HCT116 (cell line): ENCODE measurements at regions of chr2 and their contacts with region 1.

Region 1: DNA sequence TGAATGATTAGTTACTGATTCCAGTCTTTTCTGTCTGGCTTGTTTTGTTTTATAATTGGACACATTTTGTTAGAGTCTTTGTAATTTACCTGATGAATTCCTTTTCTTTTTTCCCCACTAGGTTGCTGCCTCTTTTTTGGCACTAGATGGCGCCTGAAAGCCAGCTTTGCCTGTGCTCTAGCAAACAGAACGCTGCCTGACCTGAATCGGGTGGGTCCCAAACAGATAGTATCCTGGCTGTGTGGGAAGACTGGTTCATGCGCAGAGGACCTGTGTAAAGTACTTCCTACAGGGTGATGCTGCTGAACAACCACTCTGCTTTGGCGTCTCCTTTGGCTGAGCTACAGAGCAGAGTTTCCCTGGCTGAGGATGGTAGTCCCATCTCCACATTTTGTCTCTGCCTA is 288.2 kb downstream of the IKZF2 start:
- DNase-seq: peak; percentile 47
- ATAC-seq: peak; percentile 81
- H3K4me3 ChIP-seq: no peak overlapping the region
- H3K27ac ChIP-seq: no peak overlapping the region
- H3K4me1 ChIP-seq: no peaks in the 10 kb centered on the region
- H3K27me3 ChIP-seq: no peaks in the 10 kb centered on the region
- CTCF ChIP-seq: peak; percentile 53 to 91 (median 75); a peak in 5 of 6 replicates
- POLR2A ChIP-seq: no peak
- RAD21 ChIP-seq: peak; percentile 80

Region 2: GRCh38 chr2:212311807-212312404 is 551.3 kb before region 1 on chr2:
- CTCF ChIA-PET with region 1: no interaction called
- POLR2A ChIA-PET with region 1: no interaction called
- RAD21 ChIA-PET with region 1: no interaction called
- intact Hi-C with region 1: no loop called
- DNase-seq: no peak
- ATAC-seq: no peak
- H3K4me3 ChIP-seq: no peak overlapping the region
- H3K27ac ChIP-seq: no peak overlapping the region
- H3K4me1 ChIP-seq: no peaks in the 10 kb centered on the region
- H3K27me3 ChIP-seq: no peaks in the 10 kb centered on the region
- CTCF ChIP-seq: no peak
- POLR2A ChIP-seq: no peak
- RAD21 ChIP-seq: no peak

Region 3: DNA sequence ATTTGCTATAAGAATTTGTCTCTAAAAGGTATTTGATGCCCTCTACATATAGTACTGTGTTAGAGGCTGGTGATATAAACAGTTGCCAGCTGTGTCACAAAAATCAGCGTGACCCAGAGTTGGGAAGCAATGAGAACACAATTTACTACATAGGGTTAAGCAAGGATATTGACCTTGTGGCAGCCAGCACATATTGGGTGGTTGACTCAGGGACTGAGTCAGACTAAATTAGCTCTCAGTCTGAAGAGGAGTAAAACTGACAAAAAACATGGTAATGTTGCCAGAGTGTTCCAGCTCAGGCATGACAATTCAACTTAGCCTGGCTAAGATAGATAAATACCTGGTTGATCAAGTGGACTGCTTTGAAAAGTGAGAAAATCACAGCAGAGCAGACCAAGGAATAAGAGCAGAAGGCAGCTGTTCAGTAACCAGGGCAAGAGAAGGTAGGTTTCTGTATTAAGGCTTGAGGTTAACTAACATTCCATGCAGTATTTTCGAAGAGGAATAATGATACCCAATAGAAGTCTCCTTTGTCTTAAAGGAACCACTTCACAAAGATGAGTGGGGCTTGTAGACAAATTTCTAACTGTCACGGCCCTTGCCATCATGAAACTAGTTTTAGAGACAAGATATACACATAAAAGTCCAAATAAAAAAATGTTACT is 216.4 kb before region 1 on chr2:
- CTCF ChIA-PET with region 1: no interaction called
- POLR2A ChIA-PET with region 1: no interaction called
- RAD21 ChIA-PET with region 1: no interaction called
- intact Hi-C with region 1: no loop called
- DNase-seq: no peak
- ATAC-seq: peak; percentile 47; the same call in 1 of the 2 replicates
- H3K4me3 ChIP-seq: no peak overlapping the region
- H3K27ac ChIP-seq: no peak overlapping the region
- H3K4me1 ChIP-seq: peaks cover 0 to 9% of the 10 kb centered on the region in 2 experiments; a peak in 2 of 4 replicates
- H3K27me3 ChIP-seq: no peaks in the 10 kb centered on the region
- CTCF ChIP-seq: no peak
- POLR2A ChIP-seq: no peak
- RAD21 ChIP-seq: no peak

Region 4: DNA sequence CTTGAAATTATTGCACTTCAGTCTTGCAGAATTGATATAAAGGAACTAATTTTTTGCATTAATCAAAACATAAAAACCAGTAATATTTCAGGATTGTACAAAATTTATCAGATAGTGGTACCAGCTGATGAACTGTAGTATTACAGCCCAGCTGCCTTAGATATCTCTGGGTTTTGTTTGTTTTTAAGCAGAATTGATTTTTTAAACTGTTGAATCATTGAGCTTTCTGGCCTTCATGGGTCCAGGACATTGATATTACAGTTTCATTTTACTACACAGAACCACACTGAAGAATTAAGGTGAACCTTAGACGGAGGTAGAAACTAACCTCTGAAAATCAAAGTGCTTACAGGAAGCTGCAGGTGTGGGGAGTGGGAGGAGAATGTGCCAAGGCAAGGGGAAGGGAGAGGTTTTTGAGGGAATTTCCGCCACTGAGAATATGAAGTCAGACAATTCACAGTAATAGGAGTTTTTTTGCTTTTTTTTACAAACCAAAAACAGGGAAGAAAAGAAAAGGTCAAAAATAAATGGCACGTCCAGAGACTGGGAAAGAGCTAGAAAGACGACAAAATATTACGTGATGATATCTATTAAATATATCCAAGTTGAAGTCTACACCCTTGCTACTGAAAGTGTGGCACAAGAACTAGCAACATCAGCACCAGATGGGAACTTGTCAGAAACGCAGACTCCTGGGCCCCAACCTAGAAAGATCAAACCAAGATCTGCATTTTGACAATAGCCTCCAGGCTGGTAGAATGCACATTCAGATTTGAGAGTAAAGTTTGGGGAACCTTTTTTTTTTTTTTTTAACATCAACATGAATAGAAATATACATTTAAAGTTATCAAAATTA is 380.2 kb after region 1 on chr2:
- CTCF ChIA-PET with region 1: no interaction called
- POLR2A ChIA-PET with region 1: no interaction called
- RAD21 ChIA-PET with region 1: no interaction called
- intact Hi-C with region 1: loop called (anchors 5 kb)
- DNase-seq: no peak
- ATAC-seq: no peak
- H3K4me3 ChIP-seq: no peak overlapping the region
- H3K27ac ChIP-seq: no peak overlapping the region
- H3K4me1 ChIP-seq: peaks cover 10 to 14% of the 10 kb centered on the region in 2 experiments; a peak in 3 of 4 replicates
- H3K27me3 ChIP-seq: no peaks in the 10 kb centered on the region
- CTCF ChIP-seq: no peak
- POLR2A ChIP-seq: no peak
- RAD21 ChIP-seq: no peak